ENCODE measurements at regions of chr7 and their contacts with region 1.

Region 1: GRCh38 chr7:41900532-41900931 is 197.6 kb upstream of the INHBA start:
- DNase-seq: no peak
- H3K4me3 ChIP-seq: no peak overlapping the region
- CTCF ChIP-seq: no peak

Region 2: DNA sequence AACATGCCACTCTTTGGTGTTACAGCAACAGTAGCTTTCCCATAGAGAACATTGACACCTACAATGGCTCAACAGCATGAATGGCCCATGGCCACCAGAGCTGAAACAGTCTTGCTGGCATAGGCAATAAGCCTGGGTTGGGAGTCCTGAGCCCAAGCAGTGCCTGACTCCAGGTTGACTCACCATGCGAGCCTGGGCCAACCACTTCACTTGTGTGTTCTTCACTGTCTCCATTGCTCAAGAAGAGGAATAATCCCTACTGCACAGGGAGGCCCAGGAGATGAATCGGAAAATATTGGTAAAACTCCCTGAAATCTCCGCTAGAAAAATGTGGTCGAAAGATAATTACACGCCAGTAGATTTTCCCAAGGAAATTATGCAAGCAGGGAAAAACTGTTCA is 108.4 kb before region 1 on chr7:
- CTCF ChIA-PET with region 1: no interaction called
- POLR2A ChIA-PET with region 1: no interaction called
- DNase-seq: no peak
- H3K4me3 ChIP-seq: no peak overlapping the region
- CTCF ChIP-seq: no peak

Region 3: GRCh38 chr7:41886262-41886900 is 14.2 kb before region 1 on chr7:
- CTCF ChIA-PET with region 1: interaction called, 10 read pairs
- POLR2A ChIA-PET with region 1: interaction called, 4 read pairs
- DNase-seq: peak; percentile 97
- H3K4me3 ChIP-seq: no peak overlapping the region
- CTCF ChIP-seq: no peak